Right ventricle myocardium inferior (tissue), 1 donor: ENCODE measurements at regions of chr11 and their contacts with region 1.

Region 1: DNA sequence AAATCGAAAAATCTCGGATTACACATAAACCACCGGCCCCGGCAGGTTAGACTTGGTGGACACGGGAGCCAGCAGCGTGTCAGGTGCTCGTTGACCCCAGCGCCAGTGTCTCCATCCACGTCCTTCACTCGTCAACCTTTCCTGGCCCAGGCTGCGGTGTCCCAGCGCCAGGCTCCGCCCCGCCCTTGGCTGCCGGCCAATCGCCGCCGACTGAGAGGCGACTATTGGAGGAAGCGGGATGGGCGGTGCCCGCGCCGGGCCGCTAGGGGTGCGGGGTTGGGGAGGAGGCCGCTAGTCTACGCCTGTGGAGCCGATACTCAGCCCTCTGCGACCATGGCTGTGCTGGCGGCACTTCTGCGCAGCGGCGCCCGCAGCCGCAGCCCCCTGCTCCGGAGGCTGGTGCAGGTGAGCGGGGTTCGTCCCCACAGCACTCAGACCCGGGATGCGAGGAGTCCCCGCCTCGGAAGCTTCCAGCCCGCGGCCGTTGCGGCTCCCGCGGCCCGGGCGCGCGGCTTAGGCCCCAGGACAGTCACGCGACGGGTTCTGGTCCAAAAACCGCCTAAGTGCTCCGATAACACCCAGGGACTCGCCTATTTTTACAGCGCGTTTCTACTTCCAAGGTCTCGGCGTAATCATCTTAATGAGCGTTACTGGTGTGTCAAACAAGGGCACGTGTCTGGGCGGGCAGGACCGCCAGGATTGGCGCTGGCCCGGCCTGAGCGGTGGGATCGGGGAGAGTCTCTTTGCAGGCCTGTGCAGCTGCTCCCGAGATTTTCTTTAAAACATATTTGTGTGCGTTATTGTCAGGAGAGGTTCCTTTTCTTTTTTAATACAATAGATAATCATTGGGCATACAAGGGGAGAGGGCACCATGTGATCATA is at the start of gene ACAT1:
- DNase-seq: peak; percentile 100
- ATAC-seq: peak; percentile 95
- total RNA-seq, gene ACAT1: 396 TPM

Region 2: GRCh38 chr11:108197351-108197750 is 75.8 kb after region 1 on chr11:
- intact Hi-C with region 1: no loop called
- DNase-seq: no peak
- ATAC-seq: no peak

Region 3: GRCh38 chr11:108222686-108223448 is 101.4 kb after region 1 on chr11 and contains the start of gene ATM:
- intact Hi-C with region 1: loop called (anchors 2 kb)
- DNase-seq: peak; percentile 100
- ATAC-seq: peak; percentile 98
- total RNA-seq, gene ATM: 24.9 TPM

Region 4: DNA sequence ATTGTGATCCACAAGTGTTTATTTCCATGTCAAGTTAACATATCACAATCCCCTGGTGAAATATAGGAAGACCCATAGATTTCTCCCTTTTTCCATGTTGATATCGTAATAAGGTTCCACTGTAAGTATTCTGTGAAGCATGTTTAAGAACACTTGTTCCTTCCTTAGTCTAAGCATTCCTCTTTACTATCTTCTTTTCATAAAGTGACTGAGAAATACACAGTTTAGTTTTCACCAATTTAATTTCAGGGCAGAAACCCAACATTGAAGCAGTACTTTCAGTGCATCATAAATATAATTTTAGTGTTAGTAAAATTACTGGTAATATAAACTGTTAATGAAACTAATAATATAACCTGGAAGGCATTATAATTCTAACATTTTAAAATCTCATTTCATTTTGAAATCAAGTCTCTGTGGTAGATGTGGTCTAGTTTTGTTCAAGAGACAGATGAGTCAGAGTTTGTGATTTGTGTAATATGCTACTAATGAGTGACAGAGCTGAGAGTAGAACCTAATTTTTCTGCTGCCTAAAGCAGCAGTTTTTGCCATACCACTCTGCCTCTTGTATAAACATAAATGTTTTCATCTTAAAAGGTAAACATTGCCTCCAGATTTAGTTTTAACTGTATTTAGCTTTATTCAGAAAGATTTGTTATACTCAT is 180.7 kb after region 1 on chr11:
- intact Hi-C with region 1: no loop called
- DNase-seq: no peak
- ATAC-seq: no peak